ENCODE measurements at regions of chr3 and their contacts with region 1.

Region 1: GRCh38 chr3:69273896-69274295 is 112.0 kb downstream of the FRMD4B start:
- H3K4me3 Mint-ChIP-seq: no peak overlapping the region
- H3K27ac Mint-ChIP-seq: no peak overlapping the region
- H3K4me1 Mint-ChIP-seq: no peaks in the 10 kb centered on the region
- H3K27me3 Mint-ChIP-seq: no peaks in the 10 kb centered on the region

Region 2: DNA sequence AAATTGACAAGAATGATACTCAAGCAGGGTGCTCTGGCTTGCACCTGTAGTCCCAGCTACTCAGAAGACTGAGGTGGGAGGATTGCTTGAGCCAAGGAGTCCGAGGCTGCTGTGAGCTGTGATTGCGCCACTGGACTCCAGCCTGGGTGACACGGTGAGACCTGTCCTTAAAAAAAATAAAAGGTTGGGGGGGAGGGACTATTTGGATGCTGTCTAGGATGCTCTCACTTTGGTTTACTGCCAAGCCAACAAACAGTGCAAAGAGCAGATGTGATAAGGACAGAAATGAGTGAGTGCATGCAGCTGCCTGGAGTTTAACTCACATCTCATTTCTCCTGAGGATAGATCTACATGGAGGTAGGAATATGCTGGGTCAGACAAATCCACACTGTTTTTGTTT is 18.0 kb before region 1 on chr3:
- intact Hi-C with region 1: loop called (anchors 2 kb)
- H3K4me3 Mint-ChIP-seq: no peak overlapping the region
- H3K27ac Mint-ChIP-seq: peak overlapping the region; percentile 21
- H3K4me1 Mint-ChIP-seq: no peaks in the 10 kb centered on the region
- H3K27me3 Mint-ChIP-seq: no peaks in the 10 kb centered on the region